Psoas muscle (tissue), 8 donors: ENCODE measurements at regions of chr20 and their contacts with region 1.

Region 1: GRCh38 chr20:45044084-45044573 is 56.8 kb downstream of the KCNS1 start:
- DNase-seq: no peak
- ATAC-seq: peak; percentile 63 to 84 (median 71)
- H3K4me3 ChIP-seq: no peak overlapping the region
- H3K27ac ChIP-seq: no peak overlapping the region
- H3K4me1 ChIP-seq: no peaks in the 10 kb centered on the region
- H3K27me3 ChIP-seq: no peaks in the 10 kb centered on the region
- CTCF ChIP-seq: peak; percentile 82

Region 2: DNA sequence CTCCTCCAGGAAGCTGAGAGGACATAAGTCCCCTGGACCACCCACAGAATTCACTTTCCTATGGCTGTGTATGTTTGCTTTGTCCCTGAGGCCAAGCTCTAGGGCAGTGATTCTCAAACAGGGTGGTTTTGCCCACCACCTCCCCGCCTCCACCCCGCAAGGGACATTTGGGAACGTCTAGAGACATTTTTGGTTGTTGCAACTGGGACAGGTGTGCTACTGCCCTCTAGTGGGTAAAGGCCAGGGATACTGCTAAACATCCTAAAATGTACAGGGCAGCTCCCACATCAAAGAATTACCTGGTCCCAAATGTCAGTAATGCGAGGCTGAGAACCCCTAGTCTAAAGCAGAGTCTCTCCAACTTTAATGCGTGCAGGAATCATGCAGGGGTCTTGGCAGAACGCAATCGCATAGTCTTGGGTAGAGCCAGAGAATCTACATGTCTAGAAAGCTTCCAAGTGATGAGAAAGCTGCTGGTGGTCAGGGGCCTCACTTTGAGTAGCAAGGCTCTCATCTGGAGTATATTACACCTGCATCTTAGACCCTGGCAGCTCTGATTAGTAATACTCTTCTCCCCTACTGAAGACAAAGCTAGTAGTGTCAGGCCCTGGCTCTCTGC is 51.7 kb after region 1 on chr20:
- intact Hi-C with region 1: loop called (anchors 2 to 5 kb)
- DNase-seq: no peak
- ATAC-seq: peak in 2 of 4 donors; percentile 64 to 82
- H3K4me3 ChIP-seq: no peak overlapping the region
- H3K27ac ChIP-seq: no peak overlapping the region
- H3K4me1 ChIP-seq: no peaks in the 10 kb centered on the region
- H3K27me3 ChIP-seq: peaks cover 0 to 50% (median 23%) of the 10 kb centered on the region in 3 donors
- CTCF ChIP-seq: peak; percentile 54

Region 3: DNA sequence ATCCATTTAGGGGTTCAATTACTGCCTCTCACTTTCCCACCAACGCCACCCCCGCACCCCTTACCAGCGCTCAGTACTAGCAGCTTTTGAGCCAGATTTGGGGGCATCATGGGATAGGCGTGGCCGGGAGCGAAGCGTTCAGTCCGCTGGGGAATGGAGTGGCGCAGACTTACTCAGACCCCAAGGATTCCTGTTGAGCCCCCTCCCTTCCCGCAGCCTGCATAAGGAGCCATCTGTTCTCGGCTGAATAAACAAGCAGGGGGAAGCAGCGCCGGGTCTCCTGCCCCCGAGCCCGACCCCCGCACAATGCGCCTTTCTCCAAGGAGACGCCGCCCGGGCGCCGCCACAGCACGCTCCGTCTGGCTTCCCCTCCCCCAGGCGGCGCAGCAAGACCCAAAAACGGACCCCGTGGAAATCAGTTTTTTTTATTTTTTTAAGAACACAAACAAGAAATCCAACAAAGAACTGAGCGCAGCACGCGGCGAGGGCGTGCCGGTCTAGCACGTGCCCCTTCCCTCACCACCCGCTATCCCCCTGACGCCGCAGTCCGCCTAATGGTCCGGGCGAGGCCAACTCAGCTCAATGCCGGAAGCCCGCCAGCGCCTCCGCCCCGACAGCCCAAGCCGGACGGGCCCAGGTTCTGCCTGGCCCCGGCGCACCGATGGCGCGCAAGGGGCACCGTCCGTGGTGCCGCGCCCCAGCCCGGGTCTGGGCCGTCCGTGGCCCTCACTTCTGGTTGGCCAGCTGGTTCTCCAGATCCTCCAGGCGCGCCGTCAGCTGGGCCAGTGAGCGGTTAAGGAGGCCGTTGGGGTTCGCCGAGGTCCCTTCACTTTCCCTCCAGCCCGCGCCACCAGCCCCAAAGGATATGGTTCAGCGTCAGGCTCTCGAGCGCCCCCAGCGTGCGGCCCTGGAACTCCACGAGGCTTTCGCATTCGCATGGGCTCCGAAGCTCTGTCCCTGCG is 249.2 kb after region 1 on chr20:
- intact Hi-C with region 1: loop called (anchors 2 to 10 kb)
- DNase-seq: peak; percentile 84 to 89
- ATAC-seq: peak; percentile 81 to 91 (median 90)
- H3K4me3 ChIP-seq: peak overlapping the region; percentile 62
- H3K27ac ChIP-seq: no peak overlapping the region
- H3K4me1 ChIP-seq: peaks cover 8% of the 10 kb centered on the region
- H3K27me3 ChIP-seq: peaks cover 0 to 29% (median 11%) of the 10 kb centered on the region in 3 donors
- CTCF ChIP-seq: peak; percentile 93